Activated CD4-positive, alpha-beta memory T cell treated with anti-CD3 and anti-CD28 coated beads, Interleukin-2, amount 10 ng/mL, durations not matched to agents 7 days and 5 days (primary cell): ENCODE measurements at regions of chr16 and their contacts with region 1.

Region 1: DNA sequence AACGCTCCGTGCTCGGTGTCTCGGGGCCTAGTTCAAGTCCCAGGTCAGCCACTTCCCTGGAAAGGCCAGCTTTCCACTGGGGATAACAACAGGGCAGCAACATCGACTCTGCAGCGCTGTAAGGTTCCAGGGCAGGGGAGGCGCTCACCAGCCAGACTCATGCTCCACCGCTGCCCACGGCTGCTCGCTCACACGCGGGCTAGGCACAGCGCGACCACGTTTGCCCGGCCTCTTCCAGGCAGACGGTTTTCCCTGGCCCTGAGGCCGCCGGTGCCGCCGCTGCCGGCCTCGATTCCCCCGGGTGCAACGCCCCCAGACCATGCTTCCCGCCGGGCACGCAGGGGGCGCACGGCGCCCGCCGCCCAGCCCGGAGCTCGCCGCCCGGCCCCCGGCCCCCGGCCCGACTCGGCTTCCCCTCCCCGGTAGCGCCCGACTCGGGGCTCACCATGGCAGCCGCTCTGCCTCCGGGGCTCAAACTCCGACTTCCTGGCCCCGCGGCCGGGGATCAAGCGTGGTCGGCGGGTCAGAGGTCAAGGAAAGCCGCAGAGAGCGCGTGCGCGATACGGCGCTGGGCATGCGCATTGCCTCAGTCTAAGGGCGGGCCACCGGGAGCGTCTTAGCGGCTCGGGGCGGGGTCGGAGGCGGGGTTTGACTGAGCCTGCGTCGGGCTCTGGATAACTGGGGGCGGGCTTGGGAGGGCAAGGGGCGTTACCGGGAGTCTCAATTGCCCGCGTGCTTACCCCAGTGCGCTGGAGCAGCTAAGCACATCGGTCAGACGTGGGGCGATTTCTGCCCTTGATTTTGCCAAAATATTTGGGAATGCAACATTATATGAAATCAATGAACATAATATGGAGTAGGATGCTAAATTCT is at the start of gene PAM16:
- DNase-seq: peak; percentile 98
- H3K4me3 Mint-ChIP-seq: peak within 1 kb of the TSS; percentile 93
- H3K27ac Mint-ChIP-seq: peak within 1 kb of the TSS; percentile 85
- H3K4me1 Mint-ChIP-seq: peaks cover 28% of the 10 kb centered on the region
- H3K27me3 Mint-ChIP-seq: no peaks in the 10 kb centered on the region
- total RNA-seq, gene PAM16: 29.7 to 33.9 TPM

Region 2: DNA sequence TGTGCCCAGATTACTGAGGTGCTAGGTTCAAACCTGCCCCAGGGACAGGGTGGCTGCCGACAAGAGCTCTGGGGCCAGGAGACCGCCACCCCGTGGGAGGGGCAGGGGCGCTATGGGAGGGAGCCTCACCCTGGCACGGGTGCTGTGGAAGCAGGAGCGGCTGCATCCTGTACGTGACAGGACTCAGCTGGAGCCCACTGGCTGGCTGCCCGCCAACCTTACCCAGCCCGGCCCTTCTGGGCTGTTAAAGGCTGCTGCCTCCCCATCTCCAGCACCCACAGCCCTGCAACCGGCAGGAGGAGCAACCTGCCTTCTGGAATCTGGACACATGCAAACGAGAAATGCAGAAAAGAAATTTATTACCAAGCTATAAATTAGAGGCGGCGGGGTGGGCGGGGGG is 11.1 kb before region 1 on chr16:
- CTCF ChIA-PET with region 1: no interaction called
- POLR2A ChIA-PET with region 1: interaction called, 17 read pairs
- DNase-seq: no peak
- H3K4me3 Mint-ChIP-seq: no peak overlapping the region
- H3K27ac Mint-ChIP-seq: no peak overlapping the region
- H3K4me1 Mint-ChIP-seq: no peaks in the 10 kb centered on the region
- H3K27me3 Mint-ChIP-seq: no peaks in the 10 kb centered on the region

Region 3: GRCh38 chr16:4402439-4403132 is 51.6 kb after region 1 on chr16:
- CTCF ChIA-PET with region 1: interaction called, 15 read pairs
- POLR2A ChIA-PET with region 1: no interaction called
- DNase-seq: peak; percentile 63
- H3K4me3 Mint-ChIP-seq: no peak overlapping the region
- H3K27ac Mint-ChIP-seq: no peak overlapping the region
- H3K4me1 Mint-ChIP-seq: peaks cover 12% of the 10 kb centered on the region
- H3K27me3 Mint-ChIP-seq: no peaks in the 10 kb centered on the region

Region 4: DNA sequence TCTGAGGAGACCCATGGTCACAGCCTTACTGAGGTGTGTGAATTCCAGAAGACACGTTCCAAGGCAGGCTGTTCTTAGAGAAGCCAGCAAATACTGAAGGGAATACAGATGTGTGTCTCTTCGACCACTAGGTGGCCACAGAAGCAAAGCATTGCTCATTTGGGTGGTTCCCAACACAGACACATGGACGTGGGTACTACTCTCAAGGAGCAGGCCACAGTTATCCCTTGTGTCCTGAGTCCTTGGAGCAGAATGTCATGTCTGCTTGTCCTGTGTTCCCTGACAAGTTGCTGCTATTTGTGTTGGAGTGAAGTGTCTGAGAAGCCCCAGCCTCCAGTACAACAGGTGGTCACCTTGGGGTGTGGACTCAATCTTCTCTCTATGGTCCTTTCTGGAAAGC is 155.4 kb after region 1 on chr16:
- CTCF ChIA-PET with region 1: no interaction called
- POLR2A ChIA-PET with region 1: no interaction called
- DNase-seq: peak; percentile 71
- H3K4me3 Mint-ChIP-seq: peak overlapping the region; percentile 52
- H3K27ac Mint-ChIP-seq: peak overlapping the region; percentile 93
- H3K4me1 Mint-ChIP-seq: peaks cover 58% of the 10 kb centered on the region
- H3K27me3 Mint-ChIP-seq: no peaks in the 10 kb centered on the region